HEK293T (cell line): ENCODE measurements at regions of chr3 and their contacts with region 1.

Region 1: GRCh38 chr3:100254168-100254777 is 6.5 kb upstream of the TBC1D23 start:
- DNase-seq: peak; percentile 72

Region 2: GRCh38 chr3:99833617-99834205 is 420.6 kb before region 1 on chr3:
- CTCF ChIA-PET with region 1: interaction called, 13 read pairs
- POLR2A ChIA-PET with region 1: no interaction called
- DNase-seq: no peak

Region 3: GRCh38 chr3:100068826-100069225 is 185.4 kb before region 1 on chr3:
- CTCF ChIA-PET with region 1: interaction called, 11 read pairs
- POLR2A ChIA-PET with region 1: interaction called, 4 read pairs
- DNase-seq: peak; percentile 80

Region 4: GRCh38 chr3:100231668-100232067 is 22.6 kb before region 1 on chr3:
- CTCF ChIA-PET with region 1: no interaction called
- POLR2A ChIA-PET with region 1: no interaction called
- DNase-seq: no peak

Region 5: GRCh38 chr3:100277255-100277800 is 23.1 kb after region 1 on chr3:
- CTCF ChIA-PET with region 1: no interaction called
- POLR2A ChIA-PET with region 1: no interaction called
- DNase-seq: no peak